Caco-2 (cell line): ENCODE measurements at regions of chr5 and their contacts with region 1.

Region 1: GRCh38 chr5:147188200-147189108 is 46.4 kb upstream of the STK32A start:
- DNase-seq: peak; percentile 62 to 82
- H3K4me3 ChIP-seq: no peak overlapping the region
- H3K4me3 Mint-ChIP-seq: peak overlapping the region; percentile 27
- H3K27ac Mint-ChIP-seq: peak overlapping the region; percentile 70
- H3K4me1 ChIP-seq: peaks cover 7% of the 10 kb centered on the region; the same call in 1 of the 2 replicates
- H3K4me1 Mint-ChIP-seq: peaks cover 21% of the 10 kb centered on the region
- H3K27me3 ChIP-seq: no peaks in the 10 kb centered on the region
- H3K27me3 Mint-ChIP-seq: no peaks in the 10 kb centered on the region
- CTCF ChIP-seq: peak; percentile 69 to 79

Region 2: GRCh38 chr5:146533260-146533857 is 655.1 kb before region 1 on chr5:
- CTCF ChIA-PET with region 1: interaction called, 14 read pairs
- POLR2A ChIA-PET with region 1: no interaction called
- intact Hi-C with region 1: loop called (anchors 2 kb)
- DNase-seq: peak; percentile 81 to 82
- H3K4me3 ChIP-seq: no peak overlapping the region
- H3K4me3 Mint-ChIP-seq: no peak overlapping the region
- H3K27ac Mint-ChIP-seq: no peak overlapping the region
- H3K4me1 ChIP-seq: no peaks in the 10 kb centered on the region
- H3K4me1 Mint-ChIP-seq: no peaks in the 10 kb centered on the region
- H3K27me3 ChIP-seq: no peaks in the 10 kb centered on the region
- H3K27me3 Mint-ChIP-seq: no peaks in the 10 kb centered on the region
- CTCF ChIP-seq: peak; percentile 86 to 90

Region 3: GRCh38 chr5:146662229-146662628 is 526.2 kb before region 1 on chr5:
- CTCF ChIA-PET with region 1: interaction called, 3 read pairs
- POLR2A ChIA-PET with region 1: no interaction called
- intact Hi-C with region 1: loop called (anchors 2 kb)
- DNase-seq: peak in 1 of 2 experiments; percentile 32
- H3K4me3 ChIP-seq: no peak overlapping the region
- H3K4me3 Mint-ChIP-seq: no peak overlapping the region
- H3K27ac Mint-ChIP-seq: no peak overlapping the region
- H3K4me1 ChIP-seq: no peaks in the 10 kb centered on the region
- H3K4me1 Mint-ChIP-seq: no peaks in the 10 kb centered on the region
- H3K27me3 ChIP-seq: no peaks in the 10 kb centered on the region
- H3K27me3 Mint-ChIP-seq: no peaks in the 10 kb centered on the region
- CTCF ChIP-seq: peak; percentile 60 to 66

Region 4: GRCh38 chr5:146965761-146966659 is 222.4 kb before region 1 on chr5:
- CTCF ChIA-PET with region 1: interaction called, 59 read pairs
- POLR2A ChIA-PET with region 1: no interaction called
- intact Hi-C with region 1: loop called (anchors 1 kb)
- DNase-seq: peak; percentile 73 to 82
- H3K4me3 ChIP-seq: no peak overlapping the region
- H3K4me3 Mint-ChIP-seq: no peak overlapping the region
- H3K27ac Mint-ChIP-seq: no peak overlapping the region
- H3K4me1 ChIP-seq: no peaks in the 10 kb centered on the region
- H3K4me1 Mint-ChIP-seq: peaks cover 11% of the 10 kb centered on the region
- H3K27me3 ChIP-seq: no peaks in the 10 kb centered on the region
- H3K27me3 Mint-ChIP-seq: no peaks in the 10 kb centered on the region
- CTCF ChIP-seq: peak; percentile 71 to 73

Region 5: DNA sequence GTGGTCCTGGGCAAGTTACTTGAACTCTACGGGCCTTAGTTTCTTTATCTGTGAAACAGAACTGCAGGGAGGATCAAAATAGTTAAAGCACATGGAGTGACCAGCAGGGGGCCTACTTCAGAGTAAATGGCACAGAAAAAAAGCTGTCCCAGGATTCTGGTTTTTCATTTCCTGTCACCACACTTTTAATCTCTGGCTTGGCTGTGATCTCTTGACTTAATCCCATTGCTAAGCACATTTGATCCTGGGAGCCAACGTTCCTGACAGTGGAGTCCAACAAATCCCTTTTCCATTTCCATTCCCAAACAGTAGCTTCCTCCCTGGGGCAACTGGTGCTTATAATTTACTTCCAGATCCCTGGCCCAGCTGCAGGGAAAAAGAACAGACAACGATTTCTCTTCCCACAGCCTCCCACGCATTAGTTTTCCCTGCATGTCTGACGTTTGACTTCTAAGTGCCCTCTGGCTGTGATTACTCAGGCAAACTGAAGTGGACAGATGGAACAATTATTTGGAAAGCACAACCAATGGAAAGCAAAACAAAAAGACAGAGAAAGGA is 90.1 kb before region 1 on chr5:
- CTCF ChIA-PET with region 1: interaction called, 20 read pairs
- POLR2A ChIA-PET with region 1: no interaction called
- intact Hi-C with region 1: loop called (anchors 1 kb)
- DNase-seq: peak in 1 of 2 experiments; percentile 36
- H3K4me3 ChIP-seq: no peak overlapping the region
- H3K4me3 Mint-ChIP-seq: no peak overlapping the region
- H3K27ac Mint-ChIP-seq: no peak overlapping the region
- H3K4me1 ChIP-seq: peaks cover 13% of the 10 kb centered on the region
- H3K4me1 Mint-ChIP-seq: peaks cover 24% of the 10 kb centered on the region
- H3K27me3 ChIP-seq: no peaks in the 10 kb centered on the region
- H3K27me3 Mint-ChIP-seq: no peaks in the 10 kb centered on the region
- CTCF ChIP-seq: peak; percentile 46 to 56

Region 6: DNA sequence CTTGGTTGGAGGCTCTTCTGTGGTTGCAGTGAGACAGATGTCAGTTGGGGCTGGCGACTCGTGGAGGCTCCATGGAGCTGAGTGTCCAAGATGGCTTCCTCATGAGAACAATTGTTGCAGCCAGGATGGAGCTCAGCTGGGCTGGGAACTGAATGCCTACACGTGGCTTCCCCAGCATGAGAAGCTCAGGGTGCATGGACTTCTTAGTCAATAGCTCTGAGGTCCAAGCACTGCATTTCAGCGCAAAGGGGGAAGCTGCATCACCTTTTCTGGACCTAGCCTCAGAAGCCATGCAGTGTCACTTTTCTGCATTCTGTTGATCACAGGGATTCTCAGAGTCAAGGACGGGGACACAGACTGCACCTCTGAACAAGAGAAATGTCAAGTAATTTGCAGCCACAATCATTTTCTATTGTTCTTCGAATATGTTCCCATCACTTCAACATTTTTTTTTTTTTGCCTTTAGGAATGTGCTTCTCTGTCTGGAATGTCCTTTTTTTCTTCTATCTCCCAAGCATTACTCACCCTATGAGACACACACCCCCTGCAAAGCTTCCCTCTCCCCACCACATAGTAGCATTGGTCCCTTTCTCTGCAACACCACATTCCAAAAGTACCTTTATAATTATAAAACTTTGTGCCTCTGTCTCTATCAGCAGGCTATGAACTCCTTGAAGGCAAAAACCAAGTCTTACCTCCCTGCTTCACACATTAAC is 11.2 kb before region 1 on chr5:
- CTCF ChIA-PET with region 1: interaction called, 19 read pairs
- POLR2A ChIA-PET with region 1: interaction called, 3 read pairs
- intact Hi-C with region 1: no loop called
- DNase-seq: peak in 1 of 2 experiments; percentile 40
- H3K4me3 ChIP-seq: no peak overlapping the region
- H3K4me3 Mint-ChIP-seq: peak overlapping the region; percentile 53
- H3K27ac Mint-ChIP-seq: peak overlapping the region; percentile 78
- H3K4me1 ChIP-seq: peaks cover 71% of the 10 kb centered on the region
- H3K4me1 Mint-ChIP-seq: peaks cover 55% of the 10 kb centered on the region
- H3K27me3 ChIP-seq: no peaks in the 10 kb centered on the region
- H3K27me3 Mint-ChIP-seq: no peaks in the 10 kb centered on the region
- CTCF ChIP-seq: no peak